Aorta (tissue), 5 donors: ENCODE measurements at regions of chr7 and their contacts with region 1.

Region 1: DNA sequence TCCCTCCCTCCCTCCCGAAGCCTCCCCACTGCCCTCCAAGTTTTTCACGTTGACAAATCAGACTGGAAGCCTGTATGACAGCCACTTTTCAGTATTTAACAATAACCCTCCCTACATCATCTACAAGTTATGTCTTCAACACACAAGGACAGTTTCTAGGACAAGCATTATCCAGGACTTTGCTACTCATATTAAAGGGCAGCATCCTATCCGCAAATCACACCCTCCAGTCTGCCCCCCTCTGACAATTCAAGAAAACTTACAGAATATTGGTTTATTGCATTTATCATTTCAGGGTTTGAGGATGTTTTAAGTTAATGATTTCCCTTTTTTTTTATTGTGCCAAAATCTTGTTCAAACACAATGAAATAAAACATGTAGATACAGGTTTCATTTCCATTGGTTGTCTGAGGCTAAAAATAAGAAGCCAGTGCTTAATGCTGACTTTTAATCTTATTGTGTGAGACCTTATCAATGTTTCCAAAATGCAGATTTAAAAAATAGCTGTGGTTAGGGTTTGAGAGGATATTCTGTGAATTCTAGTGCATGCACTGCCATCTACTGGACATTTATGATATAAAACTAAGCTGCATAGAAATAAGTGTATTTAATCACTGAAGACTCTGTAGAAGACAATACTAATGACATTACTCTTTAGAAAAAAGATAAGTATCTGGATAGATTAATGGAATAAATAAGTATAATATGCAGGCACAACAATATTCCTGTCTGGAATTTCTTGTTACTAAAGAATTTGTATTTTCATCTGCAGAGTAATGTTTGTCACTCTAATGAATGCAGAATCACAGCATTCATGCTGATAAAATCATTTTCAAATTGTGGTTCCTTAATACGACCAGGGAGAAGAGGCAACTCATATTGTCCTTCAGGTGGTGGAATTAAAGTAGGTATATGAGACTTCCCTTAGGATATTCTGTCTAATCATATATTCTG is 64.1 kb downstream of the CAV1 start:
- DNase-seq: no peak
- ATAC-seq: peak; percentile 57
- H3K4me3 ChIP-seq: no peak overlapping the region
- H3K27ac ChIP-seq: no peak overlapping the region
- H3K4me1 ChIP-seq: peaks cover 0 to 1% of the 10 kb centered on the region in 2 donors
- H3K27me3 ChIP-seq: no peaks in the 10 kb centered on the region

Region 2: DNA sequence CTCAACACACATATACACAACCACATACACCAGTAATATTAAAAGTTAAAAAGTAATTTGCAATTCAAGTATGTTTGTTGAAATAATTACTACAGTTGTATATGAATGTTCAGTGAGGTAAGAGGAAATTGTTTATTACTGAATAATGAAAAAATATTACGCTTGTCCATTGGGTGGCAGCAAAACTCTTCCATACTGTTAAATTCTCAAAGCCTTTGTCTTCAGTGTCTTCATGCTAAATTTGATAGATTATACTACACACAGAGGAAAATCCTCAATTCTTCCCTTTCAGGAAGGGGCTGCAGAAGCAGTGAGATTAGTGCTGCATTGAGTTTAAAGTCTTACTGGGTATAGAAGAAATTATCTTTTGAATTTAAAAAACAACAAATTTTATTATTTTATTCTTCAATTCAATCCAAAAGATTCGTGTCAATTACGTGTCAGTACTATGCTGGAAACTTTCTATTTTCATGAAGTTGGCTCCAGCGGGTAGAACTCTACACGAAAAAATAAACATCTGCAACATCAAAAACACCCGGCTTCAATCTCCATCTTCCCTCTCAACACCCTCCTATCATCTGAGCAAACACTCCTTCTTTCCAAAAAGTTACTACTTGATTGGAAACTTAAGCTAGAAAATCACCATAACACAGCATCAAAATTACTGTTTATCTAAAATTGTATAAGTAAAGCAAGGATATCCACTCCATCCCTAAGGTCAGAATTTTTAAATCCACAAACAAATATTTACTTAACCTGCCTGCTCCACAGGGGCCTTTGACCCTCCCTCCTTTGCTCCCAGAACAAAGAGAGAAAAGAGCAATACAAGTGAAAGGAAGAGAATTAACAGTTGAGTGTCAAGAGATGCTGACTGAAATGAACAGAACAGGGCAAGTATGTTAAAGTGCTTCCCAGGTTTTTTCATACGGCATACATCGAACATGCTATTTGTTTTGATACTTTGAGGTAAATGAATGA is 415.6 kb before region 1 on chr7:
- intact Hi-C with region 1: loop called (anchors 5 kb)
- DNase-seq: no peak
- ATAC-seq: peak; percentile 65
- H3K4me3 ChIP-seq: no peak overlapping the region
- H3K27ac ChIP-seq: no peak overlapping the region
- H3K4me1 ChIP-seq: peaks cover 0 to 6% of the 10 kb centered on the region in 2 donors
- H3K27me3 ChIP-seq: no peaks in the 10 kb centered on the region

Region 3: GRCh38 chr7:116180302-116180701 is 408.6 kb before region 1 on chr7:
- intact Hi-C with region 1: loop called in 1 of 2 experiments (anchors 5 kb)
- DNase-seq: no peak
- ATAC-seq: peak; percentile 68
- H3K4me3 ChIP-seq: no peak overlapping the region
- H3K27ac ChIP-seq: no peak overlapping the region
- H3K4me1 ChIP-seq: peaks cover 0 to 6% of the 10 kb centered on the region in 2 donors
- H3K27me3 ChIP-seq: no peaks in the 10 kb centered on the region

Region 4: GRCh38 chr7:116258734-116259133 is 330.2 kb before region 1 on chr7:
- intact Hi-C with region 1: loop called (anchors 2 to 5 kb)
- DNase-seq: no peak
- ATAC-seq: peak; percentile 80
- H3K4me3 ChIP-seq: no peak overlapping the region
- H3K27ac ChIP-seq: peak overlapping the region in 1 of 2 donors; percentile 22
- H3K4me1 ChIP-seq: peaks cover 0 to 2% of the 10 kb centered on the region in 2 donors
- H3K27me3 ChIP-seq: no peaks in the 10 kb centered on the region

Region 5: GRCh38 chr7:116809636-116810266 is 220.8 kb after region 1 on chr7:
- intact Hi-C with region 1: loop called (anchors 2 kb)
- DNase-seq: no peak
- ATAC-seq: peak; percentile 83
- H3K4me3 ChIP-seq: no peak overlapping the region
- H3K27ac ChIP-seq: no peak overlapping the region
- H3K4me1 ChIP-seq: no peaks in the 10 kb centered on the region
- H3K27me3 ChIP-seq: no peaks in the 10 kb centered on the region

Region 6: DNA sequence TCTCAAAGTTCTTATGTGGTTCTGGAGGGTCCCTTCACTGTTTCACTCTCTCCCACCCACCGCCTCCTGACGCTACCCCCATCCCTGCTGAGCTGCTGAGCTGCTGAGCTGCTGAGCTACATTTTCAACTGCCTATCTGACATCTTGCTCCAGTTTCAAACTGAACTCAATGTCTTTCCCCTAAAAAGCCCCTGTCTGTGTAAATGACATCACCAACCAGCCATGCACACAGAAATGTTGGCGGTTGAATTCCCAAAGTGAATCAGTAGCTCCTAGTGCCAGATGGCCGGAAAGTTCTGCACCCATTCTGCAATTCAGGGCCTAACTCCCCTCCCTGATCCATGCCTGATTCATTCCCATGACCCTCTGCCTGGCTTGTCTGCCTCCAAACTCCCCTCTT is 662.8 kb after region 1 on chr7:
- intact Hi-C with region 1: no loop called
- DNase-seq: no peak
- ATAC-seq: no peak
- H3K4me3 ChIP-seq: no peak overlapping the region
- H3K27ac ChIP-seq: no peak overlapping the region
- H3K4me1 ChIP-seq: no peaks in the 10 kb centered on the region
- H3K27me3 ChIP-seq: no peaks in the 10 kb centered on the region